BJ (cell line): ENCODE measurements at regions of chr16 and their contacts with region 1.

Region 1: DNA sequence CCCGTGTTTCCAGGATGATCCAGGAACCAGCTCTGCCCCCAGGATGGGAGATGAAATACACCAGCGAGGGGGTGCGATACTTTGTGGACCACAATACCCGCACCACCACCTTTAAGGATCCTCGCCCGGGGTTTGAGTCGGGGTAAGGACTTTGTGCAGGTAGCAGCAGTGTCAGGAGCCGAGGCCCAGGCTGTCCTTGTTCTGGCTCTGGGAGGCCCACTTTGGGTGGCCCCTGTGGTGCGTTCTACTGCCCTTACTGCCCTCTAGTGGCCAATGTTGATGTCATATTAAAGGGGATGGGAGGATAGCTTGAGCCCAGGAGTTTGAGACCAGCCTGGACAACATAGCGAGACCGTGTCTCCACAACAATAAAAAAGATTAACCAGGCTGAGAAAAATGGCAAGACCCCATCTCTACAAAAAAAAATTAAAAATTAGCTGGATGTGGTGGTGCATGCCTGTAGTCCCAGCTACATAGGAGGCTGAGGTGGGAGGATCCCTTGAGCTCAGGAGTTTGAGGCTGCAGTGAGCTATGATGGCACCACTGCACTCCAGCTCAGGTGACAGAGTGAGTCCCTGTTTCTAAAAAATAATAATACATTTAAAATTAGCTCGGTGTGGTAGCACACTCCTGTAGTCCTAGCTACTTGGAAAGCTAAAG is 20.9 kb upstream of the CLEC18A start:
- DNase-seq: no peak
- H3K4me3 ChIP-seq: no peak overlapping the region
- H3K27me3 ChIP-seq: no peaks in the 10 kb centered on the region
- CTCF ChIP-seq: peak; percentile 74

Region 2: DNA sequence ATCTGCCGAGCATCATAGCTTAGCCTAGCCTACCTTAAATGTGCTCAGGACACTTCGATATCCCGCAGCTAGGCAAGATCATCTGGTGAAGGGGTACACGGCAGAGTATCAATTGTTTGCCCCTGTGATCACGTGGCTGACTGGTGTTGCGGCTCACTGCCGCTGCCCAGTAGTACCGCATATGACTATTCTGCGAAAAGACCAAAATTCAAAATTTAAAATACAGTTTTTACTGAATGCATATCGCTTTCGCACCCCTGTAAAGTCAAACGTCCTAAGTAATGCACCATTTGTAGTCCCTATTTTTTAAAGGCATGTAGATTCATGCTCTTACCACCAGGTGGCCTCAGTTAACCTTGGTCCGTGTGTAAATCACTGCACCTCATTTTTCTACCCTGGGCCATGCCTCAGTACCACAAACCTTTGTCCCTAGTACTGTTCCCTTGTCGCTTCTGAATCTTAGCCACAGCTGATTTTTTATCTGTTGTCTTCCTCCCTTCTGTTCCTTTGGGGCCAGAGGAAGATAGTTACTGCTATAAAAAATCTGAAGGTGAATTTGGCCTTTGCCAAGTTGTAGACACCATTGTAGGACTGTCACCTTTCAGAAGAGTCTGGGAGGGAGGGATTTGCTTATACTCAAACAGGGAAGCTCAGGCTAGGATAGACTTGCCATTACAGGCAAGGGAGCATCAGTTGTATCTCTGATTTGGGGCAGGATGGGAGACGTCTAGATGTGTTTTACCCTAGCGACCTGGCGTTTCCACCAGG is 133.7 kb before region 1 on chr16:
- CTCF ChIA-PET with region 1: interaction called, 318 read pairs
- POLR2A ChIA-PET with region 1: no interaction called
- DNase-seq: no peak
- H3K4me3 ChIP-seq: no peak overlapping the region
- H3K27me3 ChIP-seq: no peaks in the 10 kb centered on the region
- CTCF ChIP-seq: peak; percentile 78

Region 3: GRCh38 chr16:69823831-69824563 is 106.2 kb before region 1 on chr16:
- CTCF ChIA-PET with region 1: interaction called, 9 read pairs
- POLR2A ChIA-PET with region 1: interaction called, 13 read pairs
- DNase-seq: no peak
- H3K4me3 ChIP-seq: no peak overlapping the region
- H3K27me3 ChIP-seq: no peaks in the 10 kb centered on the region
- CTCF ChIP-seq: no peak

Region 4: DNA sequence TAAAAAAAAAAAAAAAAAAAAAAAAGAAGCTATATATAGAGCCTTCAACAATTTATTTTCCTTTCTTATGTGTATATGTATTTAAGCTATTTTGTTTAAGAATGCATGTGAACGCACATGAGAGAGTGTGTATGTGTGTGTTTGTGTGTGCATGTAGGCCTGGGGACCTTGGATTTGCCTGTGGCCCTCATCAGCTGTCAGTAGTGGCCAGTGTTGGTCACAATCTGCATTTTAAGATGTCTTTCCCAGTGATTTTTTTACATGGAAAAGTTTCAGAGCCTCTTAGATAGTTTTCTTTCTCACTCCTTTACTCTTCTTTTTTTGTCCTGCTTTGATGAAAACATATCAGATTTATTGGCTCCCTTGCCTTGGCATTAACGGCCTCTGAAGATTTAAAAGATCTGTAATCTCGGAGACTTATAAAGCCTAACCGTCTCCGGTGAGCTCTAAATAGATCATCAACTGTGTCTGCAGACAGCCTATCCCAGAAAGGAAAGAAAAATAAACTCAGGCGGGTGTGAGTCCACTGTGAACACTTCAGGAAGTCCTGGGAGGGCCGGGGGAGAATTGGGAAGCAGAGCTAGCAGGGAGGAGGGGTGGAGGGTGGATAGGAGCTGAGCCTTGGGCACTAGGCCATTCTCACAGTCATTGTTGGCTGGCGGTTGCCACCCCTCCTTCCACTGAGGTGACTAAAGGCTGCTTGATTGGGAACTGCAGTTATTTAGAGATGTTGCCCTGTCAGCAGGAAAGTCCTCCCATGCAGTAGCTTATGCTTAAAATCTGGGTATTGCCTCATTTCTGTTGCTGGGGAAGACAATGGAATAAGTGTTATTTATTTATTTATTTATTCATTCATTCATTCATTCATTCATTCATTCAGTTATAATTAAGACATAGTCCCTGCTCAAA is 81.4 kb before region 1 on chr16:
- CTCF ChIA-PET with region 1: interaction called, 12 read pairs
- POLR2A ChIA-PET with region 1: no interaction called
- DNase-seq: peak; percentile 76
- H3K4me3 ChIP-seq: peak overlapping the region; percentile 4; the same call in 1 of the 2 replicates
- H3K27me3 ChIP-seq: no peaks in the 10 kb centered on the region
- CTCF ChIP-seq: peak; percentile 28; the same call in 1 of the 2 replicates

Region 5: GRCh38 chr16:69917739-69918138 is 12.5 kb before region 1 on chr16:
- CTCF ChIA-PET with region 1: interaction called, 19 read pairs
- POLR2A ChIA-PET with region 1: no interaction called
- DNase-seq: peak; percentile 79
- H3K4me3 ChIP-seq: peak overlapping the region; percentile 28; the same call in 1 of the 2 replicates
- H3K27me3 ChIP-seq: no peaks in the 10 kb centered on the region
- CTCF ChIP-seq: no peak